Posterior vena cava (tissue), 2 donors: ENCODE measurements at regions of chr9 and their contacts with region 1.

Region 1: DNA sequence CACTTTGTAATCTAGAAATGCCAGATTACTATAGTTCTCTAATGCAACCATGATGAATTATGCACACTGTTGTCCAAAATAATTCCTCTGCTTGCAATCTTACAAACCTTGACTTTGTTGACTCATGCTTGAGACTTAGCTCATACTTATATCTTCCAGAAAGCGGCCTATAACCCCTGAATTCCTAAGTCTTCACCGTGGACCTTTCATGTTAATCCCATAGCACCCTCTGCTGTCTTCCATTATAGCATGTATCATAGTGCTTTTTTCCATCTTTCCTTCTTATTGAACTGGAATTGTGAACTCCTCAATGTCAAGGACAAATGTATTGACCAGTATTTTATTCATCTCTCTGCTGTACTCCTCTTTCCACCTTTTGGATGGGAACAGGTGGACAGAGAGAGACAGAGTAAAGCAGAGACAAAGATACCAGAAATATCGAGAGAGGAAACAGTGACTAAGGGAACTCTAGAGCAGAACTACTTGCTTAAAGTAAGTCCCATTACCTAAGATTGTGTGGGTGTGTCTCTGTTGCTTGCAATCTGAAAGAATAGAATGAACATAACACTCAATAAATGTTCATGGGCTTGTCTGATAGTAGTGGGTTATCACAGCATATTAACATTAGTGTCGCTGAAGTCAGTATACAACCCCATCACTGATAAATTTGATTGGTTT is 110.1 kb downstream of the LURAP1L start:
- DNase-seq: no peak

Region 2: DNA sequence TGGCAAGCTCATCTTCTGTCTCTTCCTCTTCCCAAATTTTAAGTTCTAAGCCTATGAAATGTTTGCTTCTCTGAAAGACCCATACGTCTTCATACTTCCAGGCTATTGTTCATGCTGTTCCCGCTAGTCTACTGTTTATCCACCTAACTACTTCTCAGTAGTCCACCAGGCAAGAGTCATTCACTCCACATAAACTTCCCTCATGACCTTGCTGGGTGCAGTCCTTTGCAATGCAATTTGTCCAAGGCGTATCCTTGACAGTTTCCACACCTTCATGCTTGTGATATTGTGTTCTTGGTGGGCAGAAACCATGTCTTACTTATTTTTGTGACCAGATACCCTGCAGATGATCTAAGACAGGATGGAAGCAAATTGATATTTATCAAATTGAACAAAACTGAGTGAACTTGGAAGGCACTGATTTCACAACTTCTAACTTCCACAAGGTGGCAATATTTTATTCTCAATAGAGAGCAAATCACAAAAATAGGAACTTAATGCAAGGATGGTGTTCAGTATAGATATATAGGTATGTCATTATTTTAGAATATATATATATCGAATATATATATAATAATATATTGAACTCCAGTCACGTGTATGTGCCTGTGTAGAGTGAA is 161.4 kb before region 1 on chr9:
- intact Hi-C with region 1: loop called (anchors 5 to 10 kb)
- DNase-seq: no peak

Region 3: GRCh38 chr9:12775679-12776512 is 109.0 kb before region 1 on chr9:
- intact Hi-C with region 1: loop called in 1 of 2 experiments (anchors 5 kb)
- DNase-seq: no peak

Region 4: GRCh38 chr9:12863618-12864017 is 21.3 kb before region 1 on chr9:
- intact Hi-C with region 1: no loop called
- DNase-seq: no peak

Region 5: DNA sequence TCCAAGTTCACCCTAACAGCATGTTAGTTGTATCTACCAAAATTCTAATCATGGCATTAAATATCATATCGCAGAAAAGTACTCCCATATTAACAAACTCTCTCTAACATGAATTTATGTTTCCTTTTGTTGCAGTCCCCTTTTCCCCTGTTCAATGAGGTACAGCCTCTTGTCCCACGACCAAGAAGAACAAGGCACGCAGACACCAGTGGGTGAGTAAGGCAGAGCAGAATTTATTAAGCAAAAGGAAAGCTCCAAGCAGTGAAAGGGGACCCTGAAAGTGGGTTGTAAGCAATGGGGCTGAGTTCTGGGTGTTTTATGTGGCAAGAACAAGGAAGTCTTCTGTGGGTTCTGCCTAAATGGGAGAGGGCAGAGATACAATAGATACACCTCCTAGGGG is 73.4 kb after region 1 on chr9:
- intact Hi-C with region 1: loop called in 1 of 2 experiments (anchors 2 kb)
- DNase-seq: no peak